ENCODE measurements at regions of chr5 and their contacts with region 1.

Region 1: GRCh38 chr5:172714491-172715421 is 56.2 kb downstream of the DUSP1 start:
- DNase-seq: peak; percentile 75
- CTCF ChIP-seq: peak; percentile 62

Region 2: DNA sequence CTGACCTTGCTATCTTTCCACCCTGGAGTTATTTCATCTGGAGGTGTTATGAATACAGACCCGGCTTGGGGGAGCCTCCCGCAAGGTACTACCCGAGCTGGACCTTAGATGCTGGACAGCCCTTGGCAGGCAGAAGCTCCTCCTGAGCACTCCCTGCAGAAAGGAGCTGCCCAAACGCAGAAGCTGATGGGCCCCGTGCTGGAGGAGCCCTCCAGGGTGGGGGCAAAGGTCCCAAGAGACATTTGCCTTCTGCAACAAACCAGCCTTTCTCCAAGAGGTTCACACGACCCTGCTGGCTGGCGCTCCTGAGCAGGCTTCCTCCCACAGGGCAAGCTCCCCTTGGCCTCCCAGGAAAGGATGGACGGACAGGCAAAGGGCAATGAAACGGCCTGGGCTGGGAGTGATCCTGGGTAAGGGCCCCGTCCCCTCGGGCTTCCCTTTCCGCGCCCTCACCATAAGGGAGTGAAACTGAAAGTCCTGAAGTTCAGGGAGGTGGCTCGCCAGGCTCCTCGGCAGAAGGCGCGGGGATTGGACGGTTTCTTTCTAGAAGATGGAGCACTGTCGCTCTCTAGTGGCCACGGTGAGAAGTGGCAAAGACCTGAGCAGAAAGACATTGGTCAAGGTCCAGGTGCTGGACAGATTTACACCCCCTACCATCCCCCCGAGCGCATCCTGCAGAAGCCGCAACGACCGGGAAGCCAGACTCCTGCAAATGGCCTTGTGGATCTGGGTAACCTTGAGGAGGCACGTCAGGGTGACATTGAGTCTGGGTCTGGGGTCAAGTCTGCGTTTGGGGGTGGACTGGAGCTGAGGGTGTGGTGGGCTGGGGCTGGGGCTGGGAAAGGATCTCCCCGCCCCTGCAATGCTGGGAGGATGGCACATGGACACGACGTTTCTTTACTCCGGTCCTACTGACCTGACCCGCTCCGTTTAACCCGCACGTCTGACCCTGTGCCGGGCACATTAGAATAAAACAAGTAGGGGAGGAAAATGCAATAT is 17.3 kb before region 1 on chr5:
- CTCF ChIA-PET with region 1: interaction called, 20 read pairs
- POLR2A ChIA-PET with region 1: no interaction called
- DNase-seq: peak; percentile 90
- CTCF ChIP-seq: peak; percentile 87

Region 3: DNA sequence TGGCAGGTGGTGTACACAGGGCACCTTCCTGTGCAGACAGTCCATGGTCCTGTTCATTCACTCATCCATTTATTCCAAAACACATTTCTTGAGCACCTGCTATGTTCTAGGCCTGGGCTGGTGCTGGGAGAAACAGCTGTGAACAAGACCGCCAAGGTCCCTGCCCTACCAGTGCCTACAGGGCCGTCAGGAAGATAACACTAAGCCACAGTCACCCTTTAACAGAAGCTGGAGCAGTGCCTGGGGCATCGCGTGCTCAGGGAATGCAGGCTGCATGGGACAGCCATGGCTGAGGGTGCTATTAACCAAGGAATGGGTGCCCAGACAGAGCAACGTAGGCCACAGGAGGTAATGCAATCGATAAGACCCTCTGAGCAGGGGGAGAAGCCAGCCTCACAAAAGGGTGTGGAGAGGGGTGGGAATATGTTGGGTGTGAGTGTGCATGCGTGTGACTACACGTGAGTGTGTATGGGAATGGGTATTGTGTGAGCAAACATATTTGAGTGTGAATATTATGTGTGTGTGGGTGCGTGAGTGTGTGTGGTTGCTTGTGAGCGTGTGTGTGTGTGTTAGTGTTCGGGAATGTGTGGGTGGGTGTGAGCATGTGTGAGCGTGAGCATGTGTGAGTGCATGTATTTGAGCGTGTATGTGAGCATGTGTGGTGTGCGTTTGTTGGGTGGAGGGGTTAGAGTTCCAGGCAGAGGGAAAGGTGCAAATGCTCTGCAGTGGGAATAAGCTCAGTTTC is 37.2 kb after region 1 on chr5:
- CTCF ChIA-PET with region 1: interaction called, 31 read pairs
- POLR2A ChIA-PET with region 1: no interaction called
- DNase-seq: no peak
- CTCF ChIP-seq: no peak

Region 4: DNA sequence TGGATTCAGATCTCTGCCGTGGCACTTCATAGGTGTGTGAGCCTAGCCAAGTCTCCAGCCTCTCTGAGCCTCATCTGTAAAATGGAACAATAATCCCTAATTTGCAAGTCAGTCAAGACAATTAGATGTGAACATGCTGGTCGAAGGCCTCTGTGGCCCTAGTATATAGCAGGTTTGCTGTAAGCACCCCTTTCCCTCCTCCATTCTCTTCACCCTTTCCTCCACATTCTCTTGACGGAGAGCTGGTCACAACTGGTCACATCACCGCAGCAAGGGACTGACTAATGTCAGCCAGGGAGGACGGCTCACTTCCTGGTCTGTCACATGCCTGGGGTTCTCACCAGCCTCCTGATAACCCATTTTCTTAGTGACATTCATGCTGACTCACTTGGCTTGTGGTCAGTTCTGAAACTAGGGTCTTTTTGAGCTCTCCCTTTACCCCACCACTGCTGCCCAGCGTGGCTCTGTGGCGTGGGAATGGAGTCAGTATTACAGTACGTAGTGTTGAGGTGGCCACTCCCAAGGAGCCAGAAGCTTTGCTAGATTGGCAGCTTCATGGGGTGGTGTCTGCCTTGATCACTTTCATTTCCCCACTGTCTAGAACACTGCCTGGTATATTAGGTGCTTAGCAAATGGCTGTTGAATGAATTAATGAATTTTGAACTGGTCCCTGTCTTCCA is 167.1 kb after region 1 on chr5:
- CTCF ChIA-PET with region 1: interaction called, 10 read pairs
- POLR2A ChIA-PET with region 1: no interaction called
- DNase-seq: peak; percentile 77
- CTCF ChIP-seq: no peak

Region 5: GRCh38 chr5:172949426-172949825 is 234.7 kb after region 1 on chr5:
- CTCF ChIA-PET with region 1: interaction called, 12 read pairs
- POLR2A ChIA-PET with region 1: no interaction called
- DNase-seq: no peak
- CTCF ChIP-seq: no peak